CD14-positive monocyte (primary cell): ENCODE measurements at regions of chr1 and their contacts with region 1.

Region 1: DNA sequence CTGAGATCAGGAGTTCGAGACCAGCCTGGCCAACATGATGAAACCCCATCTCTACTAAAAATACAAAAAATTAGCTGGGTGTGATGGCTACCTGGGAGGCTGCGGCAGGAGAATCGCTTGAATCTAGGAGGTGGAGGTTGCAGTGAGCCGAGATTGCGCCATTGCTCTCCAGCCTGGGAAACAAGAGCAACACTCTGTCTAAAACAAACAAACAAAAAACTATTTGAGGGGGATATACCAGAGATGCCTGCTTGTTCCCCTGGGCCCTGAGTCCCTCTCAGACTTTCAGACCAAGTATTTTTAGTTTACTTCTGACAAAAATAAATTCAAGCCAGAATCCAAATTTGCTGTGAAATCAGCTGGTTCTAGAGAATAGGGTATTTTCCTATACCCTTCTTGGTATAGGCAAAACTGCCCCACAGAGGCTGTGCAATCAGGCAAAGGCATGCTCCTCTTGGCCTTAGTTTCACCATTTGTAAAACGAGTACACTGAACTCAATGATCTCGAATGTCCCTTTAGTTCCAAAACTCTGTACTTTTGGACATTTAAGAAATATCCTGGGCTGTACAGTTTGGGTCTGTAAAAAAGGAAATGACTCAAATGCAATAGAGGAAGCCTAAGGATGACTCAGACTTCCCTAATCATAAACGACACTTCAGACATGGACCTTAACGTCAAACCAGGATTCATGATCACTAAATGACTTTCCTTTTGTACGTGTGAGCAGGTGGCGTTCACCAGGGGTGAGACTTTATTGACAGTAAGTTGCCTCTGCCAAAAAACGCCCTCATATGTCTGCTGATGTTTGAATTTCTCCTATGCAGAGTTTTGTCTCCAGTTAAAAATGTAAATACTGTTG is 16.1 kb downstream of the ENSA start:
- DNase-seq: peak; percentile 91 to 99 (median 97)
- H3K4me3 ChIP-seq: peak overlapping the region; percentile 3 to 63 (median 6)
- H3K4me3 Mint-ChIP-seq: peak overlapping the region; percentile 77 to 86
- H3K27ac ChIP-seq: peak overlapping the region; percentile 99 to 100
- H3K27ac Mint-ChIP-seq: peak overlapping the region; percentile 97 to 100 (median 100)
- H3K4me1 ChIP-seq: peaks cover 66 to 81% of the 10 kb centered on the region in 2 donors
- H3K4me1 Mint-ChIP-seq: peaks cover 69% of the 10 kb centered on the region
- H3K27me3 ChIP-seq: no peaks in the 10 kb centered on the region
- H3K27me3 Mint-ChIP-seq: peaks cover 0 to 7% (median 5%) of the 10 kb centered on the region in 3 donors
- CTCF ChIP-seq: no peak

Region 2: GRCh38 chr1:150543500-150544141 is 69.7 kb before region 1 on chr1:
- intact Hi-C with region 1: no loop called
- DNase-seq: no peak
- H3K4me3 ChIP-seq: no peak overlapping the region
- H3K4me3 Mint-ChIP-seq: no peak overlapping the region
- H3K27ac ChIP-seq: no peak overlapping the region
- H3K27ac Mint-ChIP-seq: no peak overlapping the region
- H3K4me1 ChIP-seq: peaks cover 4 to 9% of the 10 kb centered on the region in 2 donors
- H3K4me1 Mint-ChIP-seq: peaks cover 14% of the 10 kb centered on the region
- H3K27me3 ChIP-seq: peaks cover 0 to 3% of the 10 kb centered on the region in 2 donors
- H3K27me3 Mint-ChIP-seq: peaks cover 4 to 9% (median 7%) of the 10 kb centered on the region in 3 donors
- CTCF ChIP-seq: no peak

Region 3: DNA sequence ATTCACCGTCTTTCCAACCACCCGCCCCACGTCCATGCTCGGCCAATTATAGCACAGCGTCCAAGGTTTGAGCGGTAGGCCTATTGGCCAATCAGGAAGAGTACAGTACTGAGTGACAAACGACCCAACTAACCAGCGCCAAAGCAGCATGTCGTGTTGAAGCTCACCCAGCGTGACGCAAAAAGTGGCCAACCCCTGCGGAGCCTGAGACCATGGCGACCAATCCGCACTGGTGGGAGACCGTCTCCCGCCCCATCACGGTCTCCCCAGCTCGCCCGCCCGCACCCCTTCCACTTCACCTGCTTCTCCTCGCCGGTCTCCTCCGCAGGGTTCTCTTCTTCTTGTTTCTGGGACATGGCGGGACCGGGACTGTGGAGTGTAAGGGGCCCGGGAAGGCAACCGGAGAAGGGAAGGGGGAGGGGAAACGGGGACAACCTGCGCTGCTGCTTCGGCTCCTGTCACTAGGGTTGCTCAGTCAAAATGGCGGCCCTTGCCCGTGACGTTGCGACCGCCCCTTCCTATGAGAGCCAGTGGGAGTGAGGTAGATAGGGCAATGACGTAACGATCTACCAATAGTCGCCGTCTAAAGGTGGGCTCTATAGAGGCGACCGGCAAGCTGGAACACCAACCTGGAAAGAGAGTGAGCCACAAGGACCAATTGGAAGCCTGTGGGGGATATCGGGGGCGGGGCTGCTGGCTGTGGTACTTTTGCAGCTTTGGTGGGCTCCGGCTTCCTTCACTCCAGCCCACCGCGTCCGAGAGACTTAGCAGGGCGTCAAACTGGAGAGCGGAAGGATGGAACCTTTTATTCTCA is 16.0 kb after region 1 on chr1 and contains the start of gene ENSA:
- intact Hi-C with region 1: loop called in 1 of 2 experiments (anchors 2 kb)
- DNase-seq: peak; percentile 98 to 99 (median 99)
- H3K4me3 ChIP-seq: peak within 1 kb of the TSS; percentile 69 to 88 (median 72)
- H3K4me3 Mint-ChIP-seq: no peak within 1 kb of the TSS
- H3K27ac ChIP-seq: peak within 1 kb of the TSS; percentile 94 to 98
- H3K27ac Mint-ChIP-seq: no peak within 1 kb of the TSS
- H3K4me1 ChIP-seq: peaks cover 18 to 21% of the 10 kb centered on the region in 2 donors
- H3K4me1 Mint-ChIP-seq: peaks cover 6% of the 10 kb centered on the region
- H3K27me3 ChIP-seq: no peaks in the 10 kb centered on the region
- H3K27me3 Mint-ChIP-seq: no peaks in the 10 kb centered on the region
- CTCF ChIP-seq: no peak
- polyA plus RNA-seq, gene ENSA: 30.6 to 40.3 (median 38.5) TPM